ENCODE measurements at regions of chr17 and their contacts with region 1.

Region 1: GRCh38 chr17:68777243-68777855 is 176.2 kb upstream of the FAM20A start:
- DNase-seq: peak; percentile 81
- H3K4me3 Mint-ChIP-seq: no peak overlapping the region
- H3K27ac Mint-ChIP-seq: no peak overlapping the region
- H3K4me1 Mint-ChIP-seq: peaks cover 2% of the 10 kb centered on the region
- H3K27me3 Mint-ChIP-seq: peaks cover 14% of the 10 kb centered on the region

Region 2: DNA sequence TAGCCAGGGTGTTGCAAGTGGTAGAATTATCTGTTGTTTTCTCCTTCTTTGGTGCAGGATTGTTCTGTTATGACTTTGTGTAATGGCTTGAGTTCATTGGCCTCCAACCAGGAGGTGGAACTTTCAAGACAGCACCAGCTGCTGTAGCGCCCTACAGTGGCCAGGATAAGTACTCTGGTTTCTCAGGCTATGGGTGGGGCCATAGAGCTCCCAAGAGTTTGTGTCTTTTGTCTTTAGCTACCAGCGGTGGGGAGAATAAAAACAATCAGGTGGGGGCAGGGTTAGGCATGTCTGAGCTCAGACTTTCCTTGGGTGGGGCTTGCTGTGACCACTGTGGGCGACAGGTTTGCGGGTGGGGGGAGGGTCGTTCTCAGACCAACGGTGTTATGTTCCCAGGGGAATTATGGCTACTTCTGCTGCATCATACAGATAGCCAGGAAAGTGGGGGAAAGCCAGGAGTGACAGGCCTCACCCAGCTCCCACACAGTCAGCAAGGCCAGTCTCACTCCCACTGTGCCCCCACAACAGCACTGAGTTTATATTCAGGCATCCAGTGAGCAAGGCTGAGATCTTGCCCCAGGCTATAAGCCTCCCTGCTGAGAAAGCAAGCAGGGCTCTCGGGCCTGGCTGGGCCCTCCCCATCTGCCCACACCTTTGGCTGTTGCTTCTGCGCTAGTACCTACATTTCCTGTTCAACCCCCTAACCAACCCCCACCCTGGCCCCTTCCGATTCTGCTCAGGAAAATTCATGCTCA is 435.9 kb after region 1 on chr17:
- intact Hi-C with region 1: no loop called
- DNase-seq: no peak
- H3K4me3 Mint-ChIP-seq: no peak overlapping the region
- H3K27ac Mint-ChIP-seq: no peak overlapping the region
- H3K4me1 Mint-ChIP-seq: no peaks in the 10 kb centered on the region
- H3K27me3 Mint-ChIP-seq: no peaks in the 10 kb centered on the region

Region 3: DNA sequence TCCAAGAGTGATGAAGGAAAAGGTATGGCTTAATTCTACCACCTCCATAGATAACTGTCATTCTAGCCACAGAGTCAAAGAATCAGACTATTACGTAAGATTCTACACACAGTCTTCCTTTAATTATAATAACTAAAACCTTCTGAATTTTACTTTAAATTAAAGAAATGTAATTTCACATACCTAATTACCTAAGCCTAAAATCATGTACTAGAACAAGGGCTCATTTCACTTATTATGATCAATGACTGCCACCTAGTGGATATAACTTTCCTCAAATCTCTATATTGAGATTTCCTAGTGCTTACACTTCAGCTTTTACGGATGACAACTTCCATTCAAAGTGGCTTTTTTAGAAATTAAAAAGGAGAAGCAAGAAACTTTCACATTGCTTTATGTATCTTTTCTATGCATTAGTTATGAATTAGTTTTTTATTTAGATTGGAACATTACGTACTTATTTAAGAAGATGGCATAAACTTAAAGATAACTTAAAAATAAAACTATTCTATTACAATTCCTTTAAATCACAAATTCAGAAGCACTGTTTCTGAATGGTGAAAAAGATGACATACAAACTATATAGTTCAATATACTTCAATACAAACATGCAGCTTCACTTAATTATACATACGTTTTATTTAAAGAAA is 469.5 kb after region 1 on chr17:
- intact Hi-C with region 1: loop called (anchors 1 kb)
- DNase-seq: no peak
- H3K4me3 Mint-ChIP-seq: no peak overlapping the region
- H3K27ac Mint-ChIP-seq: no peak overlapping the region
- H3K4me1 Mint-ChIP-seq: no peaks in the 10 kb centered on the region
- H3K27me3 Mint-ChIP-seq: no peaks in the 10 kb centered on the region

Measured in activated CD4-positive, alpha-beta T cell treated with anti-CD3 and anti-CD28 coated beads, Interleukin-2, amount 10 ng/mL, durations not matched to agents 24 days and 14 days (primary cell).